CD8-positive, alpha-beta memory T cell (primary cell): ENCODE measurements at regions of chr12 and their contacts with region 1.

Region 1: DNA sequence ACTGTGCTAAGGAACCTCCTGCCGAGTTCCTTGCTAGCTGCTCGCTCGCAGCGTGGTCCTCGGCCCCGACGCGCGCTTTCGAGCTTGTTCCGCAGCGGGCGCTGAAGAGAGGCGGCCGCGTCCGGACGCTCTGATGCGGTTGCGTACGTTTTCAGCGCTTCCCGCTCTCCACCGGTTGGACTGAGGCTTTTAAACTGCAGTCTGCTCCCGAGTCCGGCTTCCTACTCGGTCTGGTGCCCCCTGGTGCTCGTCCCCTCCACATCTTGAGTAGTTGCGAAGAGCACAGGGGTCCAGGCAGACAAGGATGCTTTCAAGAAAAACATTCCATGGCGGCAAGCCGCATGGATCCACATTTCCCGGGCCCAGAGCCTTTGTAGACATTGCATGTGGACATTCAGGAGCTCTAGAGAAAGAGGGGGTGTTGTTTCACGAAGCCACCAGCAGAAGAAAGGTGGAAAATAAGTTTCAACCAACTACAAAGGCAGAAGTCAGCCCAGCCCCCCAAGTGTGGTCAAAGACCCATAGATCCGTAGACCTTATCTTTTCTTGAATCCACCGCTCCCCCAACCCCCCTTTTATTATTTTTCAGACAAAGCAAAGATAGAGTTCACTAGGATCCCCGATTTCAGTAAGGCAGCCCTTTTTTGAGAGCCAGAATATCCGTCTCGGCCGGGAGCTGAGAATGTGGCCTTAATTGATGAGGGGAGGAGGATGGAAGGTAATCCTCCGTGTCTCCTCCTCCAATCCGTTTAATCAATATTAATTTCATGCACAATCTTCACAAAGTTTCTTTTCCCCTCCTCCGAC is 984 bp upstream of the WNK1 start:
- DNase-seq: peak; percentile 70 to 86 (median 81)
- H3K4me3 ChIP-seq: peak overlapping the region; percentile 56
- H3K4me3 Mint-ChIP-seq: no peak overlapping the region
- H3K27ac ChIP-seq: peak overlapping the region; percentile 71
- H3K27ac Mint-ChIP-seq: no peak overlapping the region
- H3K4me1 ChIP-seq: peaks cover 24% of the 10 kb centered on the region
- H3K4me1 Mint-ChIP-seq: peaks cover 12 to 24% (median 21%) of the 10 kb centered on the region in 3 donors
- H3K27me3 ChIP-seq: no peaks in the 10 kb centered on the region
- H3K27me3 Mint-ChIP-seq: no peaks in the 10 kb centered on the region

Region 2: DNA sequence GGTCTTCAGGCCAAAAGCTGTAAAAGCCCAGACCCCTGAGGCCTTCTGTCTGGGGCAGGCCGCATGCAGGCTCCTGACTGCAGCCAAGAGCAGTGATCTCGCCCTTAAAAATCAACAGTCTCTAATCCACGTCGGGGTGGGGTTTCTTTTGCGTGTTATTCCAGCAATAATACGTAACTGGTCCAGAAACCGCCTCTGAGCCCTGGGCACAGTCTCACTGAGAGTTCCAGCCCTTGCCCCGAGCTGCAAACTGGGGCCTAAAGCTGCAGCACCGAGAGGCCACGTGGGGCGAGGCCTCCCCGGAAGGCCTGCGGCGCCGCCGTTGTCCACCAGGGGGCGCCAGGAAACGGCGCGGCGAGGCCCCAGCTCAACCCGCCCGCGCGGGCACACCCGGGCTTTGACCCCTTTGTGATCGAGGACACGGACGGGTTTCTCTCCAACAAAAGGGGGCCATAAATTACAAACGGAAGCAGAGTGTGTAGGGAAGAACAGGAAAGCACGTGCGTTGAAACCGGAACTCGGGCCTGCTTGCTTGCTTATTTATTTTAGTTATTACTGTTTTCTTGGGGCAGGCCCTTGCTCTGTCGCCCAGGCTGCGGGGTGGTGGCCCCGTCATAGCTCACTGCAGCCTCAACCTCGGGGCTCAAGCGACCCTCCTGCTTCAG is 175.3 kb before region 1 on chr12:
- CTCF ChIA-PET with region 1: interaction called, 66 read pairs
- POLR2A ChIA-PET with region 1: interaction called, 7 read pairs
- DNase-seq: peak; percentile 76 to 82 (median 79)
- H3K4me3 ChIP-seq: peak overlapping the region; percentile 30
- H3K4me3 Mint-ChIP-seq: peak overlapping the region; percentile 38 to 85 (median 64)
- H3K27ac ChIP-seq: no peak overlapping the region
- H3K27ac Mint-ChIP-seq: peak overlapping the region in 5 of 8 donors; percentile 51 to 79 (median 68)
- H3K4me1 ChIP-seq: peaks cover 14% of the 10 kb centered on the region
- H3K4me1 Mint-ChIP-seq: peaks cover 13 to 21% (median 16%) of the 10 kb centered on the region in 3 donors
- H3K27me3 ChIP-seq: no peaks in the 10 kb centered on the region
- H3K27me3 Mint-ChIP-seq: peaks cover 0 to 2% of the 10 kb centered on the region in 2 donors

Region 3: GRCh38 chr12:642633-643474 is 108.5 kb before region 1 on chr12:
- CTCF ChIA-PET with region 1: interaction called, 41 read pairs
- POLR2A ChIA-PET with region 1: interaction called, 39 read pairs
- DNase-seq: peak; percentile 73 to 86 (median 77)
- H3K4me3 ChIP-seq: peak overlapping the region; percentile 92
- H3K4me3 Mint-ChIP-seq: peak overlapping the region; percentile 87 to 94 (median 92)
- H3K27ac ChIP-seq: peak overlapping the region; percentile 83
- H3K27ac Mint-ChIP-seq: peak overlapping the region; percentile 93 to 98 (median 97)
- H3K4me1 ChIP-seq: peaks cover 44% of the 10 kb centered on the region
- H3K4me1 Mint-ChIP-seq: peaks cover 44 to 58% (median 52%) of the 10 kb centered on the region in 3 donors
- H3K27me3 ChIP-seq: no peaks in the 10 kb centered on the region
- H3K27me3 Mint-ChIP-seq: peaks cover 0 to 2% of the 10 kb centered on the region in 2 donors

Region 4: DNA sequence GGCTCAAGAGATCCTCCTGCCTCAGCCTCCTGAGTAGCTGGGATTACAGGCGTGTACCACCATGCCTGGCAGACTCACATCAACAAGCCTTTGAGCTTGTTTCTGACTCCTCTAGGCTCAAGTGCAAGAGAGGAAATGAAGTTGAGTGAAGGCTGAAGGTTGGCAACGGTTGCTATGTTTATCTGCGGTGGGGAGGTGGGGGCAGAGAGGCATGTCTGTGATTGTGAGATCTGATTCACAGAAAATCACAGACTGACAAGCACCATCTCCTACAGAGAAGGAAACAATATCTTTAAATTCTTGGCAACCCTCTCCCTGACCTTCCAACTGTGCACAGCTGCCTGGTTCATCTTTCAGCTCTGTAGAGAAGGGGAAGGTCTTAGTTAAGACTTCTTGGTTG is 66.0 kb before region 1 on chr12:
- CTCF ChIA-PET with region 1: interaction called, 22 read pairs
- POLR2A ChIA-PET with region 1: interaction called, 19 read pairs
- DNase-seq: peak; percentile 73 to 94 (median 90)
- H3K4me3 ChIP-seq: no peak overlapping the region
- H3K4me3 Mint-ChIP-seq: peak overlapping the region in 6 of 7 donors; percentile 53 to 90 (median 70)
- H3K27ac ChIP-seq: peak overlapping the region; percentile 80
- H3K27ac Mint-ChIP-seq: peak overlapping the region; percentile 89 to 100 (median 98)
- H3K4me1 ChIP-seq: peaks cover 33% of the 10 kb centered on the region
- H3K4me1 Mint-ChIP-seq: peaks cover 40 to 54% (median 52%) of the 10 kb centered on the region in 3 donors
- H3K27me3 ChIP-seq: no peaks in the 10 kb centered on the region
- H3K27me3 Mint-ChIP-seq: no peaks in the 10 kb centered on the region

Region 5: GRCh38 chr12:774051-774614 is 22.7 kb after region 1 on chr12:
- CTCF ChIA-PET with region 1: interaction called, 35 read pairs
- POLR2A ChIA-PET with region 1: no interaction called
- DNase-seq: no peak
- H3K4me3 ChIP-seq: no peak overlapping the region
- H3K4me3 Mint-ChIP-seq: peak overlapping the region in 5 of 7 donors; percentile 12 to 44 (median 34)
- H3K27ac ChIP-seq: no peak overlapping the region
- H3K27ac Mint-ChIP-seq: peak overlapping the region; percentile 66 to 88 (median 80)
- H3K4me1 ChIP-seq: peaks cover 79% of the 10 kb centered on the region
- H3K4me1 Mint-ChIP-seq: peaks cover 75 to 96% (median 95%) of the 10 kb centered on the region in 3 donors
- H3K27me3 ChIP-seq: no peaks in the 10 kb centered on the region
- H3K27me3 Mint-ChIP-seq: no peaks in the 10 kb centered on the region

Region 6: GRCh38 chr12:936377-937345 is 185.3 kb after region 1 on chr12:
- CTCF ChIA-PET with region 1: no interaction called
- POLR2A ChIA-PET with region 1: no interaction called
- DNase-seq: no peak
- H3K4me3 ChIP-seq: no peak overlapping the region
- H3K4me3 Mint-ChIP-seq: no peak overlapping the region
- H3K27ac ChIP-seq: no peak overlapping the region
- H3K27ac Mint-ChIP-seq: peak overlapping the region in 3 of 8 donors; percentile 34 to 80 (median 38)
- H3K4me1 ChIP-seq: no peaks in the 10 kb centered on the region
- H3K4me1 Mint-ChIP-seq: peaks cover 9 to 21% (median 14%) of the 10 kb centered on the region in 3 donors
- H3K27me3 ChIP-seq: no peaks in the 10 kb centered on the region
- H3K27me3 Mint-ChIP-seq: no peaks in the 10 kb centered on the region